Activated naive CD4-positive, alpha-beta T cell treated with anti-CD3 and anti-CD28 coated beads, Interleukin-2, amount 10 ng/mL, durations not matched to agents 7 days and 5 days (primary cell): ENCODE measurements at regions of chr2 and their contacts with region 1.

Region 1: GRCh38 chr2:219119422-219120043 is 41.1 kb downstream of the NHEJ1 start:
- DNase-seq: peak; percentile 71
- H3K4me3 Mint-ChIP-seq: no peak overlapping the region
- H3K27ac Mint-ChIP-seq: no peak overlapping the region
- H3K4me1 Mint-ChIP-seq: peaks cover 7% of the 10 kb centered on the region
- H3K27me3 Mint-ChIP-seq: no peaks in the 10 kb centered on the region

Region 2: GRCh38 chr2:219029829-219030165 is 89.7 kb before region 1 on chr2:
- CTCF ChIA-PET with region 1: interaction called, 59 read pairs
- DNase-seq: peak; percentile 83
- H3K4me3 Mint-ChIP-seq: no peak overlapping the region
- H3K27ac Mint-ChIP-seq: no peak overlapping the region
- H3K4me1 Mint-ChIP-seq: no peaks in the 10 kb centered on the region
- H3K27me3 Mint-ChIP-seq: peaks cover 40% of the 10 kb centered on the region

Region 3: DNA sequence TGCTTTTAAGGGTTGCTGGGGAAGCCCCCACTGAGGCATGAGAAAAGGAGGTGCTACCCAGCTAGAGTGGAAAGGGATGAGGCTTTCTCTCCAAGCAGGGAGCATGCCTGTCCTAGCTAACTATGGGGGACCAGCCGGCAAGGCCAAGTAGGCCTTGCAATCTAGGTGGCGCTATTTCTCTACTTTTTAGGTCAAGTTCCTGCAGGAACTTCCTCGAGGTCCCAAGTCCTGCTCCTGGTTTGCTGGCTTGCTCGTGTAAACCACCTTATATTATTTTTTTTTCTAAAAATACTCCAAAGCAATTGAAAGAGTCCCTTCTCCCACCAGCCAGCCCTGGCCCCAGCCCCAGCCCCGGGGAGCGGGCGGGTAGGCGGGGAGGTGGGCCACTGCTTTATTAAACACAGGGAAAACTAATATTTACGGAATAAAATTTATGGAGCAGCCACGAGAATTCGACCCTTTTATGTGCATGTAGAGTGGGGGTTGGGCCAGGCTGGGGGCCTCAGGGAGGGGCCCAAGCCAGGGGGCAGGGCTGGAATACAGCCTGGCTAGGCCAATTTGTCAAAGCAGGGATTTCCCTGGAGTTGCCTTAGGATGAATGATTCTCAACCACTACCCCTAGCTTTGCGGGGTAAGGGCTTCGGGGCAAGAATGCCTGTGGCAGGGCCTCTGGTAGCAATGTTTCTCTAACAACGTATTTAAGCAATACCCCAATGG is 46.0 kb before region 1 on chr2:
- CTCF ChIA-PET with region 1: interaction called, 101 read pairs
- DNase-seq: no peak
- H3K4me3 Mint-ChIP-seq: no peak overlapping the region
- H3K27ac Mint-ChIP-seq: no peak overlapping the region
- H3K4me1 Mint-ChIP-seq: no peaks in the 10 kb centered on the region
- H3K27me3 Mint-ChIP-seq: no peaks in the 10 kb centered on the region

Region 4: DNA sequence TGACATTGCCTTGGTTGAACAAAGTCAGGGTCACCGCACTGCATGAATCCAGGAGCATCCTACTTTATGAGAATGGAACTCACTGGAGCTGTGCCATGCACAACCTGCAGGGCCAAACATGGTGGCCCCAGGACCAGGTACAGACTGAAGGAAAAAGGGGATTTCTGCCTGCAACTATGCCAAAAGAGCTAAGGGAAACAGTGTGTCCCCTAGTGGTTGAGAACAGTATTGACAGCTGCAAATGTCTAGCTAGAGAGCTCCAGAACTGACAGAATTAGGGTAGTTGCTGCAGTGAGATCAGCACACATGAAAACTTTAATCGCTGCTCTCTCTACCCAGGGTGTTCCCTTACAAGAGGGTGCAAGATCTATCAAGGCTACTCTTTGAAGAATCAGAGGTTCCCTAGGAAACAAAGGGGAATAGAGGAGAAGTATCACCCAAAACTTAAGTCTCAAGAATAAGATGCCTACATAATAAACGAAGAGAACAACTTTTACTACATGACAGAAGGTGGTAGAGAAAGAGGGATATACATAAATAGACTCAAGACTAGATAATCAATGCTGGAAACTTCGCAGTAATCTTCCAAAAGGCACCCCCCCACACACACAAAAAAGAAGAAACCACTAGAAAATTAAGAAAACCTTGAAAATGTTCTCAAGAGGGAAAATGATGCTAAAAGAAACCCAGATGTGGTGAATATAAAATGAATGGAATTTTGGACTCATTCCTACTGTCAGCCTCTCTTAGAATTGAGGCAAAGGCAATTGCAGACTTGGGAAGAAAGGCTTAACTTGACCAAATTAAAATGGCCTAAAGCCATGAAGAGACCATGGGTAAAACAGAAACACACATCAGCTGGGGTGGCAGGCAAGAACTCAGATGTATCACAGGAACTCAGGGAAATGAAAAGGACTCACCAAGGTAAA is 15.2 kb before region 1 on chr2:
- CTCF ChIA-PET with region 1: interaction called, 18 read pairs
- DNase-seq: no peak
- H3K4me3 Mint-ChIP-seq: no peak overlapping the region
- H3K27ac Mint-ChIP-seq: no peak overlapping the region
- H3K4me1 Mint-ChIP-seq: peaks cover 3% of the 10 kb centered on the region
- H3K27me3 Mint-ChIP-seq: no peaks in the 10 kb centered on the region

Region 5: DNA sequence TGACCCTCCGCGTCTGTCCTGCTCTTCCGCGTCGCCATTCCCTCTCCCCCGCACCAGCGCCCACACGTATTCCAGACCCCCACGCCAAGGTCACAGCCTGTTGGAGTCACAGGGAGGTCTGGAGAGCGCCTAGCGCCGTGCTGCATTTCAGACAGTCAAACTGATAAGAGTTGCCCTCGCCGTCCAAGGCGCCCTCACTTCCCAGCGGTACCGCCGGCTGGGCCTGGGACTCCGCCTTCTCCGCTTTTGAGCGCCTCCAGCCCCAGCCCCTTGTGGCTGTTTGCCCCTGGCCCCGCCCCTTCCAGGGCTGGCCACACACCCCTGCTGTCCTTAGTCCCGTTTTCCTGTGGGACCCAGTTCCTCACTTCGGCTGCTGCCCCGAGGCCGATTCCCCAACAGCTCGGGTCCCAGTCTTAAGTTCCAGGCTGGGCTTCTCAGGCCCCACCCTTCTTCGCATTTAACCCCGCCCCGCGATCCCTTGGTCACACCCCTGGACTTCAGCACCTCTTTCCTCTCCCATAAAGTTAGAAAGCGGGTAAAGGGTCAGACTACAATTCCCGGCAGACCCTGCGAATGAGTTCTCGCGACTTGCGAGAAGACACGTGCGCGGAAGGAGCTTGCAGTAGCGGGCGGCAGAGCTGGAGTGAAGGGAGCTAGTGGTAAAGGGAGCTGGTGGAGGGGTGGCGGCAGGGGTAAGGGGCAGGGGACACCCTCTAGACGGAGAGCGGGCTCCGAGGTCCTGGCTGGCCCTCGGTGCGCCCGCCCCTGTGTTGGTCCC is 378.9 kb after region 1 on chr2 and contains the start of gene GMPPA:
- CTCF ChIA-PET with region 1: no interaction called
- DNase-seq: peak; percentile 98
- H3K4me3 Mint-ChIP-seq: peak within 1 kb of the TSS; percentile 92
- H3K27ac Mint-ChIP-seq: peak within 1 kb of the TSS; percentile 73
- H3K4me1 Mint-ChIP-seq: peaks cover 41% of the 10 kb centered on the region
- H3K27me3 Mint-ChIP-seq: peaks cover 53% of the 10 kb centered on the region